CD4-positive, alpha-beta memory T cell (primary cell): ENCODE measurements at regions of chr1 and their contacts with region 1.

Region 1: DNA sequence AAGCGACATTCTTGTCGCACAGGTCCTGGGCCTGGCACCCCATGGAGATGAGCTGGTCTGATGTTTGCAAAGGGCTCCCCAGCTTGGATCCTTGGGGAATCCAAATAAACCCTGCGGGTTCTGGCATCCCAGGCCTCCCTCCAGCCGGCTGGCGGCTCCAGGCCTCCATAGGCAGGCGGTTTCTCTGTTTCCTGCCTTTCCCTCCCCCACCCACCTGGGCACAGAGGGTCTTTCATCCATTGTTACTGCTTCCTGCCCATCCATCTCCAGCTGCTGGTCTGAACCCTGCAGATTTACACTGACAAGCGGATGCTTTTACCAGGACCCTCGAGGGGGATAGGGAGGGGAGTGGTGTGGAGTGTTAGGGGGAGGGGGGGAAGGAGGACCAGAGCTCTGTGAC is 39.1 kb upstream of the ID3 start:
- DNase-seq: no peak
- H3K4me3 ChIP-seq: no peak overlapping the region
- H3K4me3 Mint-ChIP-seq: no peak overlapping the region
- H3K27ac ChIP-seq: no peak overlapping the region
- H3K27ac Mint-ChIP-seq: peak overlapping the region in 3 of 7 donors; percentile 25 to 88 (median 40)
- H3K4me1 ChIP-seq: peaks cover 90% of the 10 kb centered on the region
- H3K4me1 Mint-ChIP-seq: peaks cover 48 to 95% (median 80%) of the 10 kb centered on the region in 4 donors
- H3K27me3 ChIP-seq: no peaks in the 10 kb centered on the region
- H3K27me3 Mint-ChIP-seq: no peaks in the 10 kb centered on the region

Region 2: GRCh38 chr1:23577056-23578004 is 21.1 kb before region 1 on chr1:
- CTCF ChIA-PET with region 1: interaction called, 5 read pairs
- POLR2A ChIA-PET with region 1: interaction called, 28 read pairs
- intact Hi-C with region 1: no loop called
- DNase-seq: no peak
- H3K4me3 ChIP-seq: no peak overlapping the region
- H3K4me3 Mint-ChIP-seq: peak overlapping the region in 3 of 8 donors; percentile 36 to 46 (median 38)
- H3K27ac ChIP-seq: no peak overlapping the region
- H3K27ac Mint-ChIP-seq: peak overlapping the region; percentile 4 to 86 (median 54)
- H3K4me1 ChIP-seq: peaks cover 25% of the 10 kb centered on the region
- H3K4me1 Mint-ChIP-seq: peaks cover 13 to 27% (median 20%) of the 10 kb centered on the region in 4 donors
- H3K27me3 ChIP-seq: no peaks in the 10 kb centered on the region
- H3K27me3 Mint-ChIP-seq: no peaks in the 10 kb centered on the region

Region 3: GRCh38 chr1:23627069-23627735 is 28.8 kb after region 1 on chr1:
- CTCF ChIA-PET with region 1: interaction called, 9 read pairs
- POLR2A ChIA-PET with region 1: interaction called, 166 read pairs
- intact Hi-C with region 1: no loop called
- DNase-seq: peak; percentile 43 to 57 (median 53)
- H3K4me3 ChIP-seq: peak overlapping the region; percentile 57 to 58
- H3K4me3 Mint-ChIP-seq: peak overlapping the region; percentile 91 to 98 (median 94)
- H3K27ac ChIP-seq: peak overlapping the region; percentile 55
- H3K27ac Mint-ChIP-seq: peak overlapping the region; percentile 85 to 98 (median 95)
- H3K4me1 ChIP-seq: peaks cover 42% of the 10 kb centered on the region
- H3K4me1 Mint-ChIP-seq: peaks cover 39 to 60% (median 50%) of the 10 kb centered on the region in 4 donors
- H3K27me3 ChIP-seq: no peaks in the 10 kb centered on the region
- H3K27me3 Mint-ChIP-seq: no peaks in the 10 kb centered on the region